ENCODE measurements at regions of chr3 and their contacts with region 1.

Region 1: GRCh38 chr3:104596551-104596950 is 770.2 kb upstream of the ALCAM start:
- DNase-seq: peak in 1 of 6 donors; percentile 15
- ATAC-seq: peak; percentile 71 to 90 (median 88)
- H3K4me3 ChIP-seq: no peak overlapping the region
- H3K27ac ChIP-seq: no peak overlapping the region
- H3K4me1 ChIP-seq: peaks cover 0 to 9% (median 0%) of the 10 kb centered on the region in 3 donors
- H3K27me3 ChIP-seq: no peaks in the 10 kb centered on the region
- CTCF ChIP-seq: peak in 3 of 4 donors; percentile 24 to 41 (median 38)

Region 2: DNA sequence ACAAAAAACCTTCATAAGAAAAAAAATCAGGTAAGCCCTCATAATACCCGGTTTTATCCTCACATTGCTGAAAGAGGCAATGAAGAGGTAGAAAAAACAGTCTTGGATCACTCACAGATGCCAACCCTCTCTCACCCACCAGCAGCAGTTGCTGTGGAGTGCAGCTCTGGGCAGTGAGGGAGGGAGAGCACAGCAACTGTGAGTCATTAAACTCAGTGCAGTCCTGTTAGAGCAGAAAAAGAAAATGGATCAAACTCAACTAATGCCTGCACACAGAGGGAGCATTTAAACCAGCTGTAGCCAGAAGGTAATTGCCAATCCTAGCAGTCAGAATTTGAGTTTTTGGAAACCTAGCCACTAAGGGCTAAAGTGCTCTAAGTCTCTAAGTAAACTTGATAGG is 280.4 kb before region 1 on chr3:
- intact Hi-C with region 1: no loop called
- DNase-seq: no peak
- ATAC-seq: no peak
- H3K4me3 ChIP-seq: no peak overlapping the region
- H3K27ac ChIP-seq: no peak overlapping the region
- H3K4me1 ChIP-seq: no peaks in the 10 kb centered on the region
- H3K27me3 ChIP-seq: no peaks in the 10 kb centered on the region
- CTCF ChIP-seq: no peak

Region 3: GRCh38 chr3:105366326-105367062 is 769.9 kb after region 1 on chr3 and contains the start of gene ALCAM:
- intact Hi-C with region 1: loop called in 1 of 3 experiments (anchors 10 kb)
- DNase-seq: peak; percentile 95 to 97 (median 97)
- ATAC-seq: peak; percentile 75 to 84 (median 80)
- H3K4me3 ChIP-seq: peak within 1 kb of the TSS; percentile 53 to 76 (median 62)
- H3K27ac ChIP-seq: peak within 1 kb of the TSS; percentile 78 to 93 (median 82)
- H3K4me1 ChIP-seq: peaks cover 0 to 14% (median 12%) of the 10 kb centered on the region in 3 donors
- H3K27me3 ChIP-seq: no peaks in the 10 kb centered on the region
- CTCF ChIP-seq: peak in 2 of 4 donors; percentile 31 to 33
- total RNA-seq, gene ALCAM: 21.1 to 42.1 (median 27.6) TPM